Aorta (tissue), 5 donors: ENCODE measurements at regions of chr2 and their contacts with region 1.

Region 1: GRCh38 chr2:151575338-151575737 is 158.9 kb downstream of the NEB start:
- DNase-seq: no peak
- ATAC-seq: no peak
- H3K4me3 ChIP-seq: no peak overlapping the region
- H3K27ac ChIP-seq: no peak overlapping the region
- H3K4me1 ChIP-seq: no peaks in the 10 kb centered on the region
- H3K27me3 ChIP-seq: no peaks in the 10 kb centered on the region

Region 2: DNA sequence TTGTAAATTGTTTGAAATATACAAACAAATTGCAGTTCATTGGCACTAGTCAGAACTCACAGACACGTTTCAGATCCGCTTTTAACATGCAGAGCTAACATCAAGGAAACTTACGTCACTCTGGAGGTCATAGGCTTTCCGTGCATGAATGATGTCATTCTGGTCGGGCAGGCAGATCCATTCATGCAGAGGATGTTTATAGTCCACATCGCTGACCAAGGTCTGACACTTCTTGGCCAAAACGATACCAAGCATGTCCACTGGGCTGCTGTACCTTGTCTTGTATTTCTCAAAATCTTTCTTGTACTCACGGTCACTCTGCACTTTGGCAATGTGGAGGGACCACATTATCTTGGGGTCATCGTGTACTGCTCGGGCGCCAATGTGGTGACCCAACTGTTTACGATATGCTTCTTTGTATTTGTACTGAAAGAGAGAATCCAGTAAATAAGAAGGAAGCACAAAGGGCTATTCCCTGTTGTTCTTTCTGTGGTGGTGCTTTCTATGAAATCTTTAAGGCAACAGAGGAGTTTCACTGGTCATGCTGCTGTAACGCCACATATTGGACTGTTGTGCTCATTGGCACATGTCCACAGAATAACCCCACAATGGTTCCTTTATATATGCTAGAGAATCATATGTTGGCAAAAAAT is 44.1 kb after region 1 on chr2:
- intact Hi-C with region 1: no loop called
- DNase-seq: no peak
- ATAC-seq: no peak
- H3K4me3 ChIP-seq: no peak overlapping the region
- H3K27ac ChIP-seq: no peak overlapping the region
- H3K4me1 ChIP-seq: no peaks in the 10 kb centered on the region
- H3K27me3 ChIP-seq: no peaks in the 10 kb centered on the region

Region 3: GRCh38 chr2:152012697-152013096 is 437.4 kb after region 1 on chr2:
- intact Hi-C with region 1: loop called in 1 of 2 experiments (anchors 10 kb)
- DNase-seq: no peak
- ATAC-seq: no peak
- H3K4me3 ChIP-seq: no peak overlapping the region
- H3K27ac ChIP-seq: no peak overlapping the region
- H3K4me1 ChIP-seq: no peaks in the 10 kb centered on the region
- H3K27me3 ChIP-seq: no peaks in the 10 kb centered on the region